Endothelial cell of umbilical vein (primary cell): ENCODE measurements at regions of chr13 and their contacts with region 1.

Region 1: GRCh38 chr13:66618702-66619101 is 611.4 kb downstream of the PCDH9 start:
- DNase-seq: peak; percentile 60
- H3K4me3 ChIP-seq: no peak overlapping the region
- H3K27ac ChIP-seq: no peak overlapping the region
- H3K4me1 ChIP-seq: no peaks in the 10 kb centered on the region
- H3K27me3 ChIP-seq: no peaks in the 10 kb centered on the region
- CTCF ChIP-seq: peak; percentile 23 to 24
- POLR2A ChIP-seq: no peak

Region 2: DNA sequence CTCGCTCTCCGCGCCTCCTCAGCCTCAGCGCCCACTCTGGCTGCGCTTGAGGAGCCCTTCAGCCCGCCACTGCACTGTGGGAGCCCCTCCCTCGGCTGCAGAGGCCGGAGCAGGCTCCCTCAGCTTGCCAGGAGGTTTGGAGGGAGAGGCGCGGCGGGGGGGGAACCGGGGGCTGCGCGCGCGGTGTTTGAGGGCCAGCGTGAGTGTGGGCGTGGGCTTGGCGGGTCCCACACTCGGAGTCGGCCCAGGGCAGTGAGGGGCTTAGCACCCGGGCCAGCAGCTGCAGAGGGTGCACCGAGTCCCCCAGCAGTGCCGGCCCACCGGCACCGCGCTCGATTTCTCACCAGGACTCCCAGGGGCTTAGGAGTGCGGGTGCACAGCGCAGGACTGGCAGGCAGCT is 609.5 kb before region 1 on chr13:
- CTCF ChIA-PET with region 1: no interaction called
- POLR2A ChIA-PET with region 1: no interaction called
- dilution Hi-C with region 1: no loop called
- intact Hi-C with region 1: no loop called
- DNase-seq: no peak
- H3K4me3 ChIP-seq: no peak overlapping the region
- H3K27ac ChIP-seq: no peak overlapping the region
- H3K4me1 ChIP-seq: no peaks in the 10 kb centered on the region
- H3K27me3 ChIP-seq: no peaks in the 10 kb centered on the region
- CTCF ChIP-seq: no peak
- POLR2A ChIP-seq: no peak

Region 3: DNA sequence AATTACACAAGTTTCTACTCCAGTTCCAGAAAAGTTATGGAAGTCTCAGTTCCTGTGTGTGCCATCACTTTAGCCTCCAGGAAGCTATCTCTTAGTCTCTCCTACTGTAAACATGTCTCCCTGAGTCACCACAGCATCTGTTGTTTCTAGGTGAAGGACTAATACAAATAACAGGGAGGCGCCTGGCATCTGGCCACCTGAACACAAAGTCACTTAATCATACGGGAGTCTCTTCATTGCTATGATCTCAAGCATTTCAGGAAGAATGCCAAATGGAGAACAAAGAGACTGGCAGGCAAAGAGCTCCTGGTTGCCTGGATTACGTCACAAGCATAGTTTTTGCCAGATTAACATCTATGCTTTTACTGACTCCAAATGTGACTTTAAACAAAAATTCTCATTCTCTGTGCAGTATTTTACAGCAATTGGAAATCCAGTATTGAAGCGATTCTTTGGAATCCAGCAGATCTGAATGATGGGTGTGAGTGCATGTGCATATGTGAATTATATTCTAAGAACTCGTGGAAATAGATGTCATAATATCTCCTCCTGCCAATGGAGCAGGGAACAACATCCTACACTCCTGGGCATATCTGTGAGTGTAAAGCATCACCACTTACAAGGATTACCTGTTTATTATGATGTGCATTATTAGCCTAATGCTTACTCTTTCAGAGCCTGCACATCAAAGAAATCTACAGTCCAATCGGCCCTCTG is 38.6 kb after region 1 on chr13:
- CTCF ChIA-PET with region 1: interaction called, 13 read pairs
- POLR2A ChIA-PET with region 1: no interaction called
- dilution Hi-C with region 1: no loop called
- intact Hi-C with region 1: no loop called
- DNase-seq: peak; percentile 97
- H3K4me3 ChIP-seq: no peak overlapping the region
- H3K27ac ChIP-seq: peak overlapping the region; percentile 92
- H3K4me1 ChIP-seq: peaks cover 32% of the 10 kb centered on the region
- H3K27me3 ChIP-seq: no peaks in the 10 kb centered on the region
- CTCF ChIP-seq: no peak
- POLR2A ChIP-seq: peak; percentile 31

Region 4: DNA sequence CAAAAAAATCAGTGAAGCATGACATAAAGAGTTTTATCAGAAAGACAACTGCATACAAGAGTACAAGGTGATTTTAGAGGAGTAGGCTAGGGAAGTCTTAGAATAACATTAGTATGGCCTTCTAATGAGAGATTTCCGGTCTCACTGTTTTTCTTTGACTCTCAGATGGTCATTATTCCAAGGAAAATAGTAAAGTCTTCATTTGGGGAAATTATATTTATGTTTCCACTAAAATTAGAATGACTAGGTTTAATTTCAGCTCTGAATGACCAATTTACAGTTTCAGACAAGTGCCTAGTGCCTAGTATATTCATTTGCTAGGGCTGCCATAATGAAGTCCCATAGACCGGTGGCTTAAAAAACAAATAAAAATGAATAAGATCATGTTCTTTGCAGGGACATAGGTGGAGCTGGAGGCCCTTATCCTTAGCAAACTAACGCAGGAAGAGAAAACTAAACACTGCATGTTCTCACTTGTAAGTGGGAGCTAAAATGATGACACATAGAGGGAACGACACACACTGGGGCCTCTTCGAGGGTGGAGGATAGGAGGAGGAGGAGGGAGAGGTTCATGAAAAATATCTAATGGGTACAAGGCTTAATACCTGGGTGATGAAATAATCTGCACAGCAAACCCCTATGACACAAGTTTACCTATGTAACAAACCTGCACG is 308.3 kb after region 1 on chr13:
- CTCF ChIA-PET with region 1: interaction called, 4 read pairs
- POLR2A ChIA-PET with region 1: no interaction called
- dilution Hi-C with region 1: no loop called
- intact Hi-C with region 1: loop called (anchors 5 kb)
- DNase-seq: peak; percentile 66
- H3K4me3 ChIP-seq: no peak overlapping the region
- H3K27ac ChIP-seq: no peak overlapping the region
- H3K4me1 ChIP-seq: peaks cover 13% of the 10 kb centered on the region
- H3K27me3 ChIP-seq: no peaks in the 10 kb centered on the region
- CTCF ChIP-seq: no peak
- POLR2A ChIP-seq: no peak

Region 5: GRCh38 chr13:67216864-67217263 is 598.2 kb after region 1 on chr13:
- CTCF ChIA-PET with region 1: interaction called, 17 read pairs
- POLR2A ChIA-PET with region 1: no interaction called
- dilution Hi-C with region 1: no loop called
- intact Hi-C with region 1: no loop called
- DNase-seq: no peak
- H3K4me3 ChIP-seq: no peak overlapping the region
- H3K27ac ChIP-seq: no peak overlapping the region
- H3K4me1 ChIP-seq: no peaks in the 10 kb centered on the region
- H3K27me3 ChIP-seq: no peaks in the 10 kb centered on the region
- CTCF ChIP-seq: no peak
- POLR2A ChIP-seq: no peak

Region 6: DNA sequence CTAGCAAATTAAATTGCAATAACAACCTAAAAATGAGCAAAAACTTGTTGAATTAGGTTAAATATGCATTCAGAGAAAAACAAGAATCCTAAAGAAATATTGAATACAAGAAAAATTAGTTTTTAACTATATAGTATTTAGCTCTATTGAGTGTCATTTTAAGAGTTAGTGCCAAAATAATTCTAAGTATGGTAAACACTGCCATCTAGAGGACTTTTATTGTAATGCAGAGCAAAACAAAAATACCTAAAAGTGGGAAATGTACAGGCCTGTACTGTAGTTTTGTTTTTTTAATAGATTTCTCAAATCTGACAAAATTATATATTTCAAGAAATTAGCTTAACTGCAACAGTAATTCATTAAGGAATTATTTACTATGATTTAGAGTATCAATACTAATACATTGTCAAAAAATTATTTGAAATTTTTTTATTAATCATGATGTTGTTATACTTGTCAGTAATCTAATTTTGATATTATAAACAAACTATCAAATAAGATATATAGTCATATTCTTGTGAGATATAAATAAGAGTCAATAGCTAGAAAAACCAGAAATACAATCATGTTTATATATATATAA is 619.7 kb after region 1 on chr13:
- CTCF ChIA-PET with region 1: interaction called, 29 read pairs
- POLR2A ChIA-PET with region 1: no interaction called
- dilution Hi-C with region 1: no loop called
- intact Hi-C with region 1: no loop called
- DNase-seq: peak; percentile 48
- H3K4me3 ChIP-seq: no peak overlapping the region
- H3K27ac ChIP-seq: no peak overlapping the region
- H3K4me1 ChIP-seq: no peaks in the 10 kb centered on the region
- H3K27me3 ChIP-seq: no peaks in the 10 kb centered on the region
- CTCF ChIP-seq: peak; percentile 22 to 33
- POLR2A ChIP-seq: no peak